ENCODE measurements at regions of chr22 and their contacts with region 1.

Region 1: GRCh38 chr22:30754971-30755756 is 60.5 kb downstream of the OSBP2 start:
- DNase-seq: peak; percentile 61
- H3K4me3 ChIP-seq: no peak overlapping the region
- H3K27ac ChIP-seq: no peak overlapping the region
- H3K27me3 ChIP-seq: no peaks in the 10 kb centered on the region
- CTCF ChIP-seq: peak; percentile 91

Region 2: GRCh38 chr22:30386960-30387827 is 368.0 kb before region 1 on chr22 and contains the start of gene RNF215:
- CTCF ChIA-PET with region 1: interaction called, 10 read pairs
- POLR2A ChIA-PET with region 1: no interaction called
- DNase-seq: peak; percentile 18
- H3K4me3 ChIP-seq: peak within 1 kb of the TSS; percentile 72
- H3K27ac ChIP-seq: peak within 1 kb of the TSS; percentile 21
- H3K27me3 ChIP-seq: no peaks in the 10 kb centered on the region
- CTCF ChIP-seq: peak; percentile 75
- polyA plus RNA-seq, gene RNF215: 11.4 and 12.1 TPM in 2 replicates

Region 3: DNA sequence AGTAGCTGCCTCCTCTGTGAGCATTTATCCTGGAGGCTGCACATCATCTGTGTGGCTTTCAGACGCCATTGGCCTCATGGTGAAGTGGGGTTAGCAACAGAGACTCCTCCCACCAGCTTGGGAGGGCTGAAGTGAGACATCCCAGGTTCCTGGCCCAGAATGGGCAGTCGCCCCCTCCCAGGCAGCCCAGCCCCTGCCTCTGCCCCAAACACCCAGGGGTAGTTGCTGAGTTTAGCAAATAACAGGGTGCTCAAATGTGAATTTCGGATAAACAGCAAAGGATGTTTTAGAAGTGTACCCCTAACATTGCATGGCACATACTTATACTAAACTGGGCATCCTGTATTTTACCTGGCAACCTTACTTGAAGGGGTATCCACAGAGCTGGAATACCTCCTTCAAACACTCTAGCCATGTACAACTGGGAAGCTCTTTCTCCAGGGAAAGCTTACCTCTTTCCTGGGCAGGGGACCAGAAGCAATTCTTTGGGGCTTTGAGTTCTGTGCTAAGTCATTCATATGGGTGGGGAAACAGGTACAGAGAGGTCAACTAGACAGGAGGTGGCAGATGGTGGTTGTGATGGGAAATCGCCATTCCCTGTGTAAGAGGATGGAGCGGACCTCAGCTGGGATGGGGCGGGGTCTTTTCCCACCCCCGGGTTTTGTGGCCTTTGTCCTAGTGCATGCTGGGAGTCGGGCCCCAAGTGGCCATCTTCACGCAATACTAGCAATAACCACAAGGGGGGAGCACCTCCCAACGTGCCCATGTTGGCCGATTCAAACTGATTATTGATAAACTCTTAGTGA is 310.3 kb before region 1 on chr22:
- CTCF ChIA-PET with region 1: interaction called, 10 read pairs
- POLR2A ChIA-PET with region 1: no interaction called
- DNase-seq: no peak
- H3K4me3 ChIP-seq: no peak overlapping the region
- H3K27ac ChIP-seq: no peak overlapping the region
- H3K27me3 ChIP-seq: peaks cover 4% of the 10 kb centered on the region
- CTCF ChIP-seq: peak; percentile 70

Region 4: GRCh38 chr22:30606455-30607299 is 148.5 kb before region 1 on chr22 and contains the start of gene TCN2:
- CTCF ChIA-PET with region 1: interaction called, 15 read pairs
- POLR2A ChIA-PET with region 1: no interaction called
- DNase-seq: no peak
- H3K4me3 ChIP-seq: peak within 1 kb of the TSS; percentile 61
- H3K27ac ChIP-seq: peak within 1 kb of the TSS; percentile 65
- H3K27me3 ChIP-seq: no peaks in the 10 kb centered on the region
- CTCF ChIP-seq: peak; percentile 12; the same call in 1 of the 2 replicates
- polyA plus RNA-seq, gene TCN2: 6.6 and 9.1 TPM in 2 replicates

Region 5: DNA sequence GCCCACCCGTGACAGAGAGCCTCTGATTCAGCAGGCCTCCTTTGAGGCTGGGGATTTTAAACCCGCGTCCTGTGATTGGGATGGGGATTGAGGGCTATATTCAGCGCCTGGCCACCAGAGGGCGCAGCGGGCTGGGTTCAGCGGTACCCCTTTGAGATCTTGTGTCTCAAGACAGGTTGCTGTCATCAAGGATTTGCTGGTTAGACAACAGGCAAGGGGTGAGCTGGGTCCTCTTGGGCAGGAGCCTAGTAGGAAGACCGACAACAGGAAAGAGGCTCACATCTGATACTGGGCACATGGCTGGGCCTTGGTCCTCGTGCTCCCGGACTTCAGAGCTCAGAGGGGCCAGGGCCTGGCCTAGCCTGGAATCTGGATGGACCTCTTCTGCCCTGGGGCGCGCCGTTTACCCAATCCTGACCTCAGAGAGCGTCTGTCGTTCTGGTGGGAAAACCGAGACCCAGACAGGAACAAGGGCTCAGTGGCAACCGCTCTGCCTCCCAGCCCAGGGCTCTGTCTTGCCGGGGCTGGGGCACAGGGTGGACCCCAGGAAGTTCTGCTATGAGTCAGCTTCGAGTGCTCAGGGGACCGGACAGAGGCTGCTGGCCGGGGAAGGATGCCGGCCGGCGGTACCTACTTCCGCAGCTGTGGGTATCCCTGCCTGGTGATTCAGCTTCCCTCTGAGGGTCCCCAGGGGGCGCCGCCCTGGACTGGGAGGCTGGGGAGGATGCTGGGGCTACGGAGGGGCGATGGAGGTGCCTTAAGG is 120.5 kb before region 1 on chr22:
- CTCF ChIA-PET with region 1: interaction called, 199 read pairs
- POLR2A ChIA-PET with region 1: interaction called, 16 read pairs
- DNase-seq: peak; percentile 74
- H3K4me3 ChIP-seq: peak overlapping the region; percentile 39
- H3K27ac ChIP-seq: peak overlapping the region; percentile 79
- H3K27me3 ChIP-seq: no peaks in the 10 kb centered on the region
- CTCF ChIP-seq: peak; percentile 96

Region 6: DNA sequence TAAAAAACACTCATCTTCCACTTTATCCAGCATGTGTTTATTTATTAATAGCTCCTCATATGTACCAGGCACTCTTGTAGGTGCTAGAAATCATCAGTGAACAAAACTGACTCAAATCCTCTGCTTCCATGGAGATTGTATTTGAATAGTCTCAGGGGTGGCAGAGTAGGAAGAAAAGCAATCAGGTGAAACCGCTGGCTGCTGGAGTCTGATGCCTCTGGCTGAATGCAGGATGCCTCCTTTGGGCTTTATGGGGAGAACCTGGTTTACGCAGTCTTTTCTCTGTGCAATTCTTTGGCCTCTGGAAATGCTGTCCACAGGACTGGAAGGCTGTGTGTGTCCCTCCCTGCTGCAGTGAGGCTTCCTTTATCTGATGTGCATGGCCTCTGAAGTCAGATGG is 73.3 kb before region 1 on chr22:
- CTCF ChIA-PET with region 1: interaction called, 10 read pairs
- POLR2A ChIA-PET with region 1: no interaction called
- DNase-seq: no peak
- H3K4me3 ChIP-seq: no peak overlapping the region
- H3K27ac ChIP-seq: no peak overlapping the region
- H3K27me3 ChIP-seq: peaks cover 5% of the 10 kb centered on the region
- CTCF ChIP-seq: no peak

Region 7: GRCh38 chr22:30802202-30803166 is 47.3 kb after region 1 on chr22:
- CTCF ChIA-PET with region 1: no interaction called
- POLR2A ChIA-PET with region 1: no interaction called
- DNase-seq: peak; percentile 74
- H3K4me3 ChIP-seq: peak overlapping the region; percentile 48
- H3K27ac ChIP-seq: no peak overlapping the region
- H3K27me3 ChIP-seq: peaks cover 8% of the 10 kb centered on the region
- CTCF ChIP-seq: peak; percentile 22; the same call in 1 of the 2 replicates

Measured in AG04450 (cell line).